ENCODE measurements at regions of chr11 and their contacts with region 1.

Region 1: GRCh38 chr11:61516675-61517572 is 8.4 kb downstream of the LRRC10B start:
- DNase-seq: peak; percentile 84
- H3K4me3 ChIP-seq: peak overlapping the region; percentile 31
- H3K27ac ChIP-seq: peak overlapping the region; percentile 65
- H3K4me1 ChIP-seq: peaks cover 41% of the 10 kb centered on the region
- H3K27me3 ChIP-seq: no peaks in the 10 kb centered on the region
- CTCF ChIP-seq: peak; percentile 100

Region 2: GRCh38 chr11:61429691-61430582 is 87.0 kb before region 1 on chr11 and contains the starts of genes CPSF7 and SDHAF2:
- CTCF ChIA-PET with region 1: interaction called, 6 read pairs
- POLR2A ChIA-PET with region 1: no interaction called
- intact Hi-C with region 1: loop called (anchors 5 kb)
- DNase-seq: peak; percentile 99
- H3K4me3 ChIP-seq: peak within 1 kb of the TSS; percentile 70
- H3K27ac ChIP-seq: peak within 1 kb of the TSS; percentile 99
- H3K4me1 ChIP-seq: peaks cover 12% of the 10 kb centered on the region
- H3K27me3 ChIP-seq: no peaks in the 10 kb centered on the region
- CTCF ChIP-seq: no peak
- total RNA-seq, gene CPSF7: 160 and 162 TPM in 2 replicates
- total RNA-seq, gene SDHAF2: 46.6 and 49.1 TPM in 2 replicates

Region 3: GRCh38 chr11:61488651-61489291 is 28.2 kb before region 1 on chr11:
- CTCF ChIA-PET with region 1: interaction called, 11 read pairs
- POLR2A ChIA-PET with region 1: no interaction called
- intact Hi-C with region 1: no loop called
- DNase-seq: no peak
- H3K4me3 ChIP-seq: no peak overlapping the region
- H3K27ac ChIP-seq: no peak overlapping the region
- H3K4me1 ChIP-seq: peaks cover 7% of the 10 kb centered on the region
- H3K27me3 ChIP-seq: no peaks in the 10 kb centered on the region
- CTCF ChIP-seq: no peak

Region 4: DNA sequence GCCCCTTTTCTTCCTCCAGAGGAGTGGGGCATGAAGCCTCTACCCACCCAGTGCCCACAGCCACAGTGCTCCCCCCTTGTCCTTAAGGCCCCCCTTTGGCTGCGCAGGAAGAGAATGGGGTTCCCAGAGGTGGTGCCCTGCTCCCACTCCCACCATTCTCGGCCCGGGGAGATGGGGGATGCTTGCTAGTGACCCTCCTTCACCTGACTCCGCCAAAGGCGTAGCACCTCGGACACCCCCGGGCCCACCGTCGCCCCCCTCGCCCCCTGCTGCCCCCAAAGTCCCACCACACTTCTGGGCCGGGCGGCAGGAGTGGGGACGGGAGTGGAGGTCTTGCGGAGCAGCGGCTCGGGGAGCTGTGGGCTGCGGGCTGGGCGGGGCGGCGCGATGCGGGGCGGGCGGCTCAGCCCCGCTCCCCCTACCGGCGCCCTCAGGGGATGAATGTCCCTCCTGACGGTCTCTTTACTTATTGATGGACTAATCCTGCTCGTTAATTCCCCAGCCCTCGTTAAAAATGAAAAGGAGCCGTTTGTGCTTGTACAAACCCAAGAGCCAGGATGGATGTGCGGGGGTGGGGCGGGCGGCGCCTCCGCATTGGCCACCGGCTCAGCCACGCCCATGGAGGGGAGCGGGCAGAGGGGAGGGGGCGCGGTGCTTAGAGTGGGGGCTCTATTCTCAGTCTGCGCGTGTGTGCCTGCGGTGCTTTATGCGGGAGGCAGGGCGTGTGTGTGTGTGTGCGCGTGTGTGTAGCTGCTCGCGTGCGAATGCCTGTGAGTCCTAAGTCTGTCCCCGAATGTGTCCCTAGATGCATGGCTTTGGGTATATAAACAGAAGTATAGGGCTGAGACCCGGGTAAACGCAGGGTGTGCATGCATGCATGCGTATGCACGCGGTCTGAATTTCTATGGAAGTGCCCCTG is 38.4 kb after region 1 on chr11:
- CTCF ChIA-PET with region 1: no interaction called
- POLR2A ChIA-PET with region 1: no interaction called
- intact Hi-C with region 1: no loop called
- DNase-seq: peak; percentile 52
- H3K4me3 ChIP-seq: peak overlapping the region; percentile 23
- H3K27ac ChIP-seq: no peak overlapping the region
- H3K4me1 ChIP-seq: peaks cover 21% of the 10 kb centered on the region
- H3K27me3 ChIP-seq: peaks cover 43% of the 10 kb centered on the region
- CTCF ChIP-seq: peak; percentile 45

Region 5: GRCh38 chr11:61567286-61568061 is 50.5 kb after region 1 on chr11:
- CTCF ChIA-PET with region 1: no interaction called
- POLR2A ChIA-PET with region 1: no interaction called
- intact Hi-C with region 1: loop called (anchors 5 kb)
- DNase-seq: peak; percentile 91
- H3K4me3 ChIP-seq: no peak overlapping the region
- H3K27ac ChIP-seq: no peak overlapping the region
- H3K4me1 ChIP-seq: no peaks in the 10 kb centered on the region
- H3K27me3 ChIP-seq: peaks cover 56% of the 10 kb centered on the region
- CTCF ChIP-seq: peak; percentile 72

Measured in A673 (cell line).